Breast epithelium (tissue), 4 donors: ENCODE measurements at regions of chr6 and their contacts with region 1.

Region 1: DNA sequence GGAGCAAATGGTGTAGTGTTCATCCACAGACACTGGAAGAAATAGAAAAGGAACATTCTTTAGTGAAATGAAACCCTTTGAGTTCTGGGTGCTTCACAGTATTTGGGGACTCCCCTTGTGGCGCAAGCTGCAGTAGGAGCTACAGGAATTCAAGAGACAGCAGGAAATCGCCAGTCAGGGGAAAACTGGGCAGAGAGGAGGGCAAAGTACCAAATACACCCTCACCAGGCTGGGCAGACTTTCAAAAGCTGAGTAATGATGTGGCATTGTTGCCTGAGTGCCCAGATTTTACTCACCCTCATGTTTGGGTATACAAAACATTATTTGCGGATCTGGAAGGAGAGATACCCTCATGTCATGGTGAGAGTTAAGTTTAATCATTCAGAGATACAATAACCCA is 97.9 kb downstream of the SOD2 start:
- DNase-seq: no peak
- H3K4me3 ChIP-seq: no peak overlapping the region
- H3K27ac ChIP-seq: no peak overlapping the region
- H3K4me1 ChIP-seq: no peaks in the 10 kb centered on the region
- H3K27me3 ChIP-seq: no peaks in the 10 kb centered on the region
- CTCF ChIP-seq: no peak
- POLR2A ChIP-seq: no peak

Region 2: GRCh38 chr6:159359581-159360297 is 235.4 kb before region 1 on chr6:
- intact Hi-C with region 1: loop called (anchors 10 kb)
- DNase-seq: no peak
- H3K4me3 ChIP-seq: no peak overlapping the region
- H3K27ac ChIP-seq: no peak overlapping the region
- H3K4me1 ChIP-seq: no peaks in the 10 kb centered on the region
- H3K27me3 ChIP-seq: no peaks in the 10 kb centered on the region
- CTCF ChIP-seq: no peak
- POLR2A ChIP-seq: no peak

Region 3: DNA sequence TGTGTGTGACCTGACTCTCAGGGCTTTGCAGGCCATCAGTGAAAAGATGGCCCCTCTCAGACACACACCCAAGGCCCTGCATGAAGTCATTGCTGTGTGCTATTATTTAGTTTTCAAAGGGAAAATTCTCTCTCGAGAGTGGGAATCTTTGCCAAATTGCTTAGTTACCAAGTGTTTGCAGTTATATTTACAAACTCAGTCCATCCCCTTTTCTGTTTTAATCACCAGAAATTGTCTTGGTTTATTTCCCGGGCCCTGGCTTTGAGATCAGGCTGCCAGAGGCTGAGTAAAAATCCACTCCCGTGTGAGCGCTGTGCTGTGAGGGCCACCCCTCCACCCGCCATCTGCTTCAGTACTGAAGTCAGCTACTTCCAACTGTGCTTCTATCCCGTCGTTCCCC is 65.2 kb before region 1 on chr6:
- intact Hi-C with region 1: no loop called
- DNase-seq: no peak
- H3K4me3 ChIP-seq: no peak overlapping the region
- H3K27ac ChIP-seq: no peak overlapping the region
- H3K4me1 ChIP-seq: no peaks in the 10 kb centered on the region
- H3K27me3 ChIP-seq: no peaks in the 10 kb centered on the region
- CTCF ChIP-seq: no peak
- POLR2A ChIP-seq: no peak